GM12878 (cell line): ENCODE measurements at regions of chr2 and their contacts with region 1.

Region 1: GRCh38 chr2:6896930-6897759 is 19.6 kb downstream of the RSAD2 start:
- DNase-seq: no peak
- ATAC-seq: peak; percentile 64
- H3K4me3 ChIP-seq: no peak overlapping the region
- H3K27ac ChIP-seq: no peak overlapping the region
- H3K4me1 ChIP-seq: no peaks in the 10 kb centered on the region
- H3K27me3 ChIP-seq: no peaks in the 10 kb centered on the region
- CTCF ChIP-seq: peak; percentile 50 to 81 (median 68); a peak in 5 of 6 replicates
- EP300 ChIP-seq: no peak
- POLR2A ChIP-seq: no peak
- RAD21 ChIP-seq: peak; percentile 89

Region 2: DNA sequence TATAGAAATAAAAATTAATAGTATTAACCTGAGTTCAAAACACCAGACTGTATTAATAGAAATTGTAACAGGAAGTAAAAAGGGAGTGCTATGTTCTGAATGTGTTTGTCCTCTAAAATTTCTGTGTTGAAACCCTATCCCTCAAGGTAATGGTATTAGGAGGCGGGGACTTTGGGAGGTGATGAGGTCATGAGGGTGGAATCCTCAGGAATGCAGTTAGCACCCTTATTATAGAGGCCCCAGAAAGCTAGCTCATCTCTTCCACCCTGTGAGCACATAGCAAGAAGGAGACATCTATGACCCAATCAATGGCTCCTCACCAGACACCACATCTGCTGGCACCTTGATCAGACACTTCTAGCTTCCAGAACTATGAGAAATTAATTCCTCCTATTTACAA is 155.9 kb before region 1 on chr2:
- CTCF ChIA-PET with region 1: no interaction called
- POLR2A ChIA-PET with region 1: no interaction called
- RAD21 ChIA-PET with region 1: no interaction called
- SMC1A ChIA-PET with region 1: no interaction called
- in situ Hi-C with region 1: no loop called
- intact Hi-C with region 1: no loop called
- DNase-seq: no peak
- ATAC-seq: no peak
- H3K4me3 ChIP-seq: no peak overlapping the region
- H3K27ac ChIP-seq: no peak overlapping the region
- H3K4me1 ChIP-seq: no peaks in the 10 kb centered on the region
- H3K27me3 ChIP-seq: 0 out of 4 replicates have a peak, but pooled peaks cover 0 to 3% of the 10 kb centered on the region in 2 experiments
- CTCF ChIP-seq: no peak
- EP300 ChIP-seq: no peak
- POLR2A ChIP-seq: no peak
- RAD21 ChIP-seq: no peak

Region 3: DNA sequence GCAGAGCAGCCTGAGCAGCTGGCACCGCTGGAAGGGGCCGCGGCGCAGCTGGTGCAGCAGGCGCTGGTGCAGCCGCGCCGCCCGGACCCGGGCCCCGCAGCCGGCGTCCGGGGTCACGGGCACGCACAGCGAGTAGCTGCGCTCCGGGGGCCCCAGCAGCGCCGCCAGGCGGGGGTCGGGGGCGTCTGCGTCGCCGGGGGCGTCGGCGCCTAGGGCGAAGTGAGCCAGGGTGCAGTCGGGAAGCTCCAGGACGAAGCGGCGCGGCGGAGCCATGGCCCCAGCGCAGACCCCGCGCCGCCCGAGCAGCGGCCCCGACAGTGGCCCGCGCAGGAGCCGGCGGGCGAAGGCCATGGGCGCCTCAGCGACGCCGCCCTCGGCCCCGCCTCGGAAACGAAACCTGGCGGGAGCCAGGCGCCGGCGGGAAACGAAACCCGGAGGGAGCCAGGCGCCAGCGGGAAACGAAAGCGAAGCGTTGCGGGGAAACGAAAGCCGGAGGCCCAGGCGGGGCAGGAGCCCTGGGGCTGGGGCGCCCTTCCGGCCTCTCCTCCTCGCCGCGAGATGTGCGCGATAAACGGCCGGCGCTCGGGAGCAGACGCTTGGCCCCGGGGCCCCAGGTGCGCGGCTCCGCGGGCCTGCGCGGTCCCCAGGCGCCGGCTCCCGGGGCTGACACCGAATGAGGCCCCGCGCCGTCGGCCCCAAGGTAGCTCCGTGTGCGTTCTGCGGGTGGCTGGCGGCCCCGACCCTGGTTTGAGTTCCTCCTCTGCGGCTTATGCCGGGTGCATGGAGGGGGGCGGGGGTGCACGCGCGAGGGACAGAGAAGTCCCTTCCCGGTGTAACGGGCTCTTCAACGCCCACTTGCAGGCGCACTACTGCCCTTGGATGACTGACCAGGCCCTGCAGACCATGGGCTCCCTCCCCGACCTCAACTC is 31.5 kb before region 1 on chr2 and contains the start of gene CMPK2:
- CTCF ChIA-PET with region 1: interaction called, 14 read pairs
- POLR2A ChIA-PET with region 1: interaction called, 5 read pairs
- RAD21 ChIA-PET with region 1: no interaction called
- SMC1A ChIA-PET with region 1: interaction called, 8 read pairs
- in situ Hi-C with region 1: no loop called
- intact Hi-C with region 1: no loop called
- DNase-seq: peak; percentile 33
- ATAC-seq: peak; percentile 87
- H3K4me3 ChIP-seq: peak within 1 kb of the TSS; percentile 77
- H3K27ac ChIP-seq: peak within 1 kb of the TSS; percentile 68
- H3K4me1 ChIP-seq: peaks cover 12% of the 10 kb centered on the region; the same call in 1 of the 2 replicates
- H3K27me3 ChIP-seq: no peaks in the 10 kb centered on the region; a peak in 2 of 4 replicates
- CTCF ChIP-seq: peak; percentile 16 to 38 (median 28); a peak in 2 of 6 replicates
- EP300 ChIP-seq: no peak
- POLR2A ChIP-seq: peak; percentile 73
- RAD21 ChIP-seq: no peak
- polyA plus RNA-seq, gene CMPK2: 1.9 to 2.3 TPM

Region 4: GRCh38 chr2:6909431-6910385 is 12.6 kb after region 1 on chr2:
- CTCF ChIA-PET with region 1: interaction called, 50 read pairs
- POLR2A ChIA-PET with region 1: interaction called, 4 read pairs
- RAD21 ChIA-PET with region 1: interaction called, 35 read pairs
- SMC1A ChIA-PET with region 1: interaction called, 53 read pairs
- in situ Hi-C with region 1: no loop called
- intact Hi-C with region 1: no loop called
- DNase-seq: peak; percentile 87
- ATAC-seq: peak; percentile 97
- H3K4me3 ChIP-seq: no peak overlapping the region; the same call in 1 of the 2 replicates
- H3K27ac ChIP-seq: peak overlapping the region; percentile 90
- H3K4me1 ChIP-seq: peaks cover 30% of the 10 kb centered on the region
- H3K27me3 ChIP-seq: no peaks in the 10 kb centered on the region
- CTCF ChIP-seq: no peak
- EP300 ChIP-seq: peak; percentile 94
- POLR2A ChIP-seq: no peak
- RAD21 ChIP-seq: 0 out of 2 replicates have a peak, but pooled peaks have one; percentile 5

Region 5: GRCh38 chr2:6968319-6969100 is 71.4 kb after region 1 on chr2:
- CTCF ChIA-PET with region 1: interaction called, 3 read pairs
- POLR2A ChIA-PET with region 1: no interaction called
- RAD21 ChIA-PET with region 1: interaction called, 8 read pairs
- SMC1A ChIA-PET with region 1: interaction called, 6 read pairs
- in situ Hi-C with region 1: no loop called
- intact Hi-C with region 1: loop called (anchors 2 kb)
- DNase-seq: no peak
- ATAC-seq: 0 out of 3 replicates have a peak, but pooled peaks have one; percentile 17
- H3K4me3 ChIP-seq: no peak overlapping the region
- H3K27ac ChIP-seq: no peak overlapping the region
- H3K4me1 ChIP-seq: no peaks in the 10 kb centered on the region
- H3K27me3 ChIP-seq: no peaks in the 10 kb centered on the region
- CTCF ChIP-seq: no peak
- EP300 ChIP-seq: no peak
- POLR2A ChIP-seq: no peak
- RAD21 ChIP-seq: 0 out of 2 replicates have a peak, but pooled peaks have one; percentile 19

Region 6: DNA sequence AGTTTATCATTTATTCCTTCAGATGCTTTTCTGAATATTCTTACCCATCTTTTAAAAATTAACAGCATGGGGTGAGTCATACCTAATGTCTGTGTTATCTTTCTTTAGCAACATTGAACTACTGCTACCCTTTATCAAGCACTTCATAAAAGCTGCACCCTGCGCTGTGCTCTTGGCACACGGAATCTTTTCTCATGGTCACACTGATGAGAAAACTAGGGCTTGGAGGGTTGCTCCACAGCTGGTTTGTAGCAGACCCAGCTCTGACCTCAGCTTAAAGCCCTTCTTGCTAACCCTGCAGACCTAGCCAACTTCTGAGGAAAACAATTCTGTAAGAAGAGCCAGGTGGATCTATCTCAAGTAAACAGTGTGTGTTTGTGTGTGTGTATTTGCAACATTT is 126.4 kb after region 1 on chr2:
- CTCF ChIA-PET with region 1: interaction called, 12 read pairs
- POLR2A ChIA-PET with region 1: no interaction called
- RAD21 ChIA-PET with region 1: interaction called, 5 read pairs
- SMC1A ChIA-PET with region 1: interaction called, 6 read pairs
- in situ Hi-C with region 1: no loop called
- intact Hi-C with region 1: no loop called
- DNase-seq: no peak
- ATAC-seq: no peak
- H3K4me3 ChIP-seq: no peak overlapping the region
- H3K27ac ChIP-seq: no peak overlapping the region
- H3K4me1 ChIP-seq: no peaks in the 10 kb centered on the region
- H3K27me3 ChIP-seq: no peaks in the 10 kb centered on the region
- CTCF ChIP-seq: no peak
- EP300 ChIP-seq: no peak
- POLR2A ChIP-seq: no peak
- RAD21 ChIP-seq: no peak

Region 7: GRCh38 chr2:7083577-7084509 is 186.7 kb after region 1 on chr2:
- CTCF ChIA-PET with region 1: interaction called, 21 read pairs
- POLR2A ChIA-PET with region 1: no interaction called
- RAD21 ChIA-PET with region 1: interaction called, 6 read pairs
- SMC1A ChIA-PET with region 1: interaction called, 18 read pairs
- in situ Hi-C with region 1: no loop called
- intact Hi-C with region 1: loop called (anchors 1 kb)
- DNase-seq: no peak
- ATAC-seq: peak; percentile 78
- H3K4me3 ChIP-seq: no peak overlapping the region
- H3K27ac ChIP-seq: no peak overlapping the region
- H3K4me1 ChIP-seq: no peaks in the 10 kb centered on the region
- H3K27me3 ChIP-seq: peaks cover 0 to 3% of the 10 kb centered on the region in 2 experiments; a peak in 1 of 4 replicates
- CTCF ChIP-seq: peak; percentile 47 to 67 (median 51)
- EP300 ChIP-seq: no peak
- POLR2A ChIP-seq: no peak
- RAD21 ChIP-seq: peak; percentile 68